ENCODE measurements at regions of chr14 and their contacts with region 1.

Region 1: DNA sequence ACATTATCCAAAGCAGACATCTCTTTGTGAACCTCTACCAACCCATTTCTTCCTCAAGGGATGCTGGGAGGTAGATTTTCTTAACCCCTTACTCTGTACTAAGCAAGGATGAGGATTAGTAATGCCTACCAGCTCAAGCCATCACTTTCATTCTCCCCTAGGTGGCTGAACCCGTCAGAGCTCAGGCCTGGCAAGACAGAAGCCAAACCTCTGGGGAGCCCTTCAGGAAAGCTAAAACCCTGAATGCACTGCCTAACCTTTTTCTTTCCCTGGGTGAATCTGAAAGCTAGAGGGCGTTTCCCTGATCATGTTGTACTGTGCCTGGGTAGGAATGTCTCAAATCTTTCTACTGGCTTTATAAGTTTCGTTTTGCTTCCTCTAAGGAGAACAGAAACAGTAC is 617.3 kb downstream of the RPL10L start:
- DNase-seq: no peak
- ATAC-seq: no peak
- H3K4me3 ChIP-seq: no peak overlapping the region
- H3K27ac ChIP-seq: no peak overlapping the region
- H3K4me1 ChIP-seq: no peaks in the 10 kb centered on the region
- H3K27me3 ChIP-seq: no peaks in the 10 kb centered on the region; the same call in 1 of the 2 replicates
- CTCF ChIP-seq: no peak; the same call in 1 of the 2 replicates

Region 2: GRCh38 chr14:46048127-46048526 is 13.8 kb after region 1 on chr14:
- CTCF ChIA-PET with region 1: no interaction called
- POLR2A ChIA-PET with region 1: no interaction called
- intact Hi-C with region 1: no loop called
- DNase-seq: peak; percentile 90
- ATAC-seq: no peak
- H3K4me3 ChIP-seq: no peak overlapping the region
- H3K27ac ChIP-seq: no peak overlapping the region
- H3K4me1 ChIP-seq: peaks cover 11% of the 10 kb centered on the region
- H3K27me3 ChIP-seq: no peaks in the 10 kb centered on the region
- CTCF ChIP-seq: no peak; the same call in 1 of the 2 replicates

Region 3: DNA sequence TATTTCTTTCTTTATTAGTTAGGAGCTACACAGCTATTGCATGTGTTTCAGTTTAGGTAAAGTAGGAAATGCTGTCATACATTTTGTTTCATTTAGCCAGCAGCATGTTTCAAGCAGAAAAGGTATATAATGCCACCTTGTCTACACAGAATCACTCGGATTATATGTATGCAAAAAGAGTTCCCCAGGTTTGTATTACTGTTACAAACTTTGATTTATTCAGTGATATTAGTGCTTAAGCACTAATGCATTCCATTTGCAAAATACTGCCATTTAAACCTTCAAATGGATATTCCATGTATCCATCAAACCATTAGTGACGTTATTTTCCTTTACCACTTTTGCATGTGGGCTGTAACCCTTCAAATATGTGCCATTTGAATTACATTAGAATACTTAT is 53.3 kb after region 1 on chr14:
- CTCF ChIA-PET with region 1: no interaction called
- POLR2A ChIA-PET with region 1: no interaction called
- intact Hi-C with region 1: loop called (anchors 10 kb)
- DNase-seq: no peak
- ATAC-seq: no peak
- H3K4me3 ChIP-seq: no peak overlapping the region
- H3K27ac ChIP-seq: no peak overlapping the region
- H3K4me1 ChIP-seq: no peaks in the 10 kb centered on the region
- H3K27me3 ChIP-seq: no peaks in the 10 kb centered on the region
- CTCF ChIP-seq: no peak